ENCODE measurements at regions of chr1 and their contacts with region 1.

Region 1: DNA sequence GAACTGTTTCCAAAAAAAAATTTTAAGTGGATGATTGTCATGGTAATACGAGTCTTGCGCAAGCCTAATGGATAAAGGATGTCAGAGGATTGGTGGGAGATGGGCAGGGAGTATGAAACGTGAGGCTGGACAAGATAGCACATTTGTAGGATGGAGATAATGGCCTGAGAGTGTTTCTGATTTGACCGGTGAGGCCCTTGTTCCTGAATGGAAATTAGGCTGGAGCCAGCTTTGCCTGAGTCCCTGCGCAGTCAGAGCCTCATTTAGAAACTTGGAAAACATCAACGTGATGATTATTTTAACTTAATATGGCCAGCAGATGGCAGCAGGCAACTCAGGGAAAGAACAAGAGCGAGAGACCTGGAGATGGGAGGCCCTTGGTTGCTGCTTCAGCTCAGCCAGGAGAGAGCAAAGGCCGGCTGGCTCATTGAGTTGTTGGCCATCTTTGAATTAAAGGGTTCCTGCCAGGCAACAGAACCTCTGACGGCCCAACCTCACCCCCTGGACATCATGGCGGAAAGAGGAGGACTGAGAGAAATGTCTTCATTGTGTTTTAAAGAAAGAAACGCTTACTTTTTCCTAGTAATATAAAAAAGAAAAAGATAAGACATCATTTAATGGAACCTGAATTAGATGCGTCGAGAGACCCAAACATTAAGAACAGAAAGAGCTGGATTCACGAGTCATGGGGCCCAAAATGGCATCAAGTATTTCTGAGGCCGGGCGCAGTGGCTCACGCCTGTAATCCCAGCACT is 80.3 kb downstream of the SELENOF start:
- DNase-seq: peak; percentile 73
- CTCF ChIP-seq: peak; percentile 32

Region 2: DNA sequence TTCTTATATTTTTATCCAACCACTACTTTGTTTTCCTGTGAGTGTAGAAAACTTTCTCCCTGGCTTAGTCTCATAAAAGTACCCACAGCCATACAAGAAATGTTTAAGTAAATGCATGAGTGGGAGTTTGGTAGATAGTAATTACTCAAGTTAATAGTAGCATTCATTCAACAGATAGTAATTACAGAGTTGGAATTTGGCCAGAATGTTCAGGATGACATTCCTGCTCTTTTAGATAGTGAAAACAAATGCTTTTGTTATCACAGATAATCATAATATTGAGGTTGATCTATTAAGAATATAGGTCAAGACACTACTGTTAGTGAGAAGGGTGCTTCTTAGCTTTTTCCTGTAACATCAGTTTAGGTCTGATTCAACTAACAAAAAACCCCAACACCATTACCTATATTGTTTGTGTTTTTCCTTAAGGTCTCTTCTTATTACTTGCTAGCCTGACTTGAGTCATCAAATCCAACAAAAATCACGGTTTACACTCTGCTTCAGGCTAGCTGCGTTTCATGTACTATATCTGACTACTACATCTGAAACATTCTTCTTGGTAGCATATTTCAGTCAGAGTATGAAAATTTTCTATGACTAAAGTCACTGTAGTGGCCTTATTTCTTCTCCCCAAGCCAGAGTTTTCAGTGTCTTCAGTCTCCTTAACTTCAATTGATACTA is 244.5 kb after region 1 on chr1:
- in situ Hi-C with region 1: loop called (anchors 5 kb)
- DNase-seq: no peak
- CTCF ChIP-seq: no peak

Measured in GM13976 (cell line).